Posterior vena cava (tissue), 2 donors: ENCODE measurements at regions of chr1 and their contacts with region 1.

Region 1: DNA sequence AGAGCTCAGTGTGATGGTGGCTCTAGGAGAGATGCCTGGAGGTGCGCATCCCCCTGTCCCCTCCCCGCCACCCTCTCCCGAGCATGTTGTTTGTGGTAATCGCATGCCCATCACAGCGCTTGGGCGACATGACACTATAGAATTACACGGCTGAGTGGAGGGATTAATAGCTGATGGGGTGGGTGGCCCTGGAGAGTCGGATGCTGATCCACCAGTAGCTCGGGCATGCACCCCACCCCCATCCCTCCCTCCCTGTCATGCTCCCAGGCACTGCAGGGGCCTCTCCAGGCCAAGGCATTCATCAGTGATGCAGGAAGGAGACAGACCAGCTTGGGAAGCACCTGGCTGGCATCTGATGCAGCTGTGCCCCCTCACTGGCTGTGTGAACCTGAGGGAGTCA is 159.0 kb upstream of the IGSF21 start:
- DNase-seq: no peak

Region 2: DNA sequence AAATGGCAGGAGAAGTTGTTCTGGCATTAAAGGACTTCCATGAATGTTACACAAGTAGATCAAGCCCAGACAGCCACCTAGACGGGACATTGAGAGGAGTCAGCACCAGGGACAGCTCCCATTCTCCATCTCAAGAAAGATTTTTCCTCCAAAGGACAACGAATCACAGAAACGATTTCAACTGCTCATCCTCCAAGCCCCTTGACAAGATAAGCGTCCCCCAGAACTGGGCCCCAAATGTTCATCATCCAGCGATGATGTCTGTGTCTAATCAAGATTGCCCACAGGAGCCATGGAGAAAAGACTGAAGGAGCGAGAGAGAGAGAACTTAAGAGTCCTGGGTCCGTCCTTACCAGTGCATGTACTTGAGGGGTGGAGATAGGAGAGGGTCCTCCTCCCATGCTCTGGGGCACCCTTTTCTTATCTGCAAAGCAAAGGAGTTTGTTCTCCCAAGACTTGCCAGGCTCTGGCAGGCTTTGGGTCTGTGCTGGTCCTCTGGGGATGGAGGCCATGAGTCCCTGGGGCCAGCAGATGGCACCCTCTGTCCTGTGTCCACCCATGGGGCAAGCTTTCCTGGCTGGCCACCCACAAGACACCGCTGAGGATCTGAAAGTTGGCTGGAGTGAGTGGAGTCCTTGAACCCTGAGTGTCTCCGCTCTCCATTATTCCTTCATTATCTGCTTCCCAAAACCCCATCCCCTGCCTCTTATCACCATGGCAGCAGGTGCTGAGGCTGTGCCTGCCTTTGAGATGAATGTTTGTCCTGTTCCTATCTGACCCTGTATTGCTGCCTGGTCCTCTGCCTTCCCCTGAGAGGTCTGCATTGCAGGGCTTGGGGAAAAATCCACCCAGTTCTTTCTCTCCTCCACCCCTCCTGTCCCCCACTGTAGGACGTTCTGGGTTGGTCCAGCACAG is 28.8 kb before region 1 on chr1:
- intact Hi-C with region 1: no loop called
- DNase-seq: no peak

Region 3: DNA sequence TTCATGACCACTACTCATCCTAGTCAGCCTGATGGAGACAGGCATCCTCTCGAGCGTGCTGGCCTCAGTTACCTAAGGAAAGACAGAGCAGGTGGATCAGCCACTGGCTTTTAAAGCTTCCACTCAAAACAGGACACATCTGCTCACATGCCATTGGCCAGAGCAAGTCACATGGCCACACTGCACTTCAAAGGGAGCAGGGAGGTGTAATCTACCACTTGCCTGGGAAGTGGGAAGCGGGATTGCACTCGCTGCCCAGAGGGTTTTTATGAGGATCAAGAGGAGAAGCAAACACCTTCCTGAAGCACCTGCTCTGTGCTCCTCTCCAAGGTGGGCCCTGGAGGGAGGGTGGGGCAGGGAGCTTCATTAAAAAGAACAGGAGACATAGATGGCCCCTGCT is 802.8 kb after region 1 on chr1:
- intact Hi-C with region 1: loop called in 1 of 2 experiments (anchors 5 kb)
- DNase-seq: no peak